A549 (cell line): ENCODE measurements at regions of chr6 and their contacts with region 1.

Region 1: DNA sequence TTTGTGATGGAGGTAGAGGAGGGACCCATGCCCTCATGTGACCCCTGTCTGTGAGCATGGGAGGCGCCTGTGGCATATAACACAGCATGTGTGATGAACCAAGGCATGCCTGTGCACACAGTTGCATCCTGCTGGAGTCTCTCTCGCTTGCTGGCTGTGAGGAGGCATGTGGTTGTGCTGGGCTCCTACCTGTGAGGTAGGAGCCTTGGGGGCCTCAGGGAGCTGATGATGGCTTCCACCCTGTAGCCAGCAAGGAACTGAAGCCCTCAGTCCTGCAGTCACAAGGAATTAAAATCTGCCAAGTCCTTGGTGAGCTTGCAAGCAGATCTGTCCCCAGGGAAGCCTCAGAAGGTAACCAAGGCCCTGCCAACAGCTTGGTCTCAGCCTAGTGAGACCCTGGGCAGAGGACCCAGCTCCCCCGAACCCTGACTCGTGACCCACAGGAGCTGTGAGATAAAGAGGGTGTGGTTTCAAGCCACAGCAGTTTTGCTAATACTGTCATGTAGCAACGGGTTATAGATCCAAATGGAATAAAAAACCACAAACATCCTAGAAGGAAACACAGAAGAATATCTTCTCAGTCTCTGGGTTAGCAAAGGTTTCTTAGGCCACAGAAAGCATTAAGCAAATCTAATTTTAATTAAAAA is 145.7 kb downstream of the WDR27 start:
- DNase-seq: no peak
- ATAC-seq: no peak
- H3K4me3 ChIP-seq: no peak overlapping the region
- H3K27ac ChIP-seq: no peak overlapping the region
- H3K4me1 ChIP-seq: no peaks in the 10 kb centered on the region
- CTCF ChIP-seq: no peak
- EP300 ChIP-seq: no peak
- POLR2A ChIP-seq: no peak
- RAD21 ChIP-seq: no peak

Region 2: DNA sequence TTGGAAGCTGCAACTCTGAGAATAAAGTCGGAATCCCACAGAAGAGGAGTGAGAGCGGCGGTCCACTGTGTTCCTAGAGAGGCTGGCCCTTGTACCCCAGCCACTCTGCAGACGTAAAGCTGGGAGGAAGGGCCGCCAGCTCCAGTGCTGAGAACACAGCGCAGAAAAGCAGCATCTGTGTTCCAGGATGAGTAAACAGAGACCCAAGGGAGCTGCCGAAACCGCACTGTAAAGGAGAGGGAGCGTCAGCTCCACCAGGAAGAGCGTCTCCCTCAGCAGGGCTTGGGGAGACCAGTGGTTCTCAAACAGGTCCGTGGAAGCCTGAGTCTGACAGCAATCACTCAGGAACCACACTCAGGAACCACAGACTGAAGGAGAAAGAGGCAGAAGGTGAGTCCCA is 11.7 kb after region 1 on chr6:
- CTCF ChIA-PET with region 1: no interaction called
- POLR2A ChIA-PET with region 1: interaction called, 10 read pairs
- DNase-seq: no peak
- ATAC-seq: no peak
- H3K4me3 ChIP-seq: no peak overlapping the region
- H3K27ac ChIP-seq: no peak overlapping the region
- H3K4me1 ChIP-seq: peaks cover 8% of the 10 kb centered on the region; the same call in 2 of the 3 replicates
- CTCF ChIP-seq: no peak
- EP300 ChIP-seq: no peak
- POLR2A ChIP-seq: no peak
- RAD21 ChIP-seq: no peak